ENCODE measurements at regions of chr3 and their contacts with region 1.

Region 1: DNA sequence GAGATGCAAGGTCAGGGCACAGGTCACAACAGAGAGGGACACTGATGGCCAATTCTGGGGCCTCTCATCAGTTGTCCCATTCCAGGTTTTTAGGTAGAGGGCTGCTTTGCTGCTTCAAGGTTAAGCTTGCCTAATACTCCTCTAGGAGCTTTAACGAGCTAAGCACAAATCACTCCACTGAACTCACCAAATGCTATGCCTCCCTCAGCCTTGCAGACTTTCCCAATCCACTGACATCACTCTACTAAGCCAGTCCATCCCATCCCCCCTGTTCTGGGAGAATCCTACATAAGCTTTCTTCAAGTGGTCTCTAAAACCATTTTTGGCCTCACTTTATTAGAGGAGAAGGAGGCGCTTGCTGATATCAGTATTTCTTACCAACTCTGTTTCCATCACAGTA is 24.8 kb upstream of the PDCD6IP start:
- DNase-seq: no peak
- ATAC-seq: no peak
- H3K4me3 Mint-ChIP-seq: no peak overlapping the region
- H3K27ac Mint-ChIP-seq: no peak overlapping the region
- H3K4me1 Mint-ChIP-seq: no peaks in the 10 kb centered on the region
- H3K27me3 Mint-ChIP-seq: no peaks in the 10 kb centered on the region

Region 2: GRCh38 chr3:33441585-33441984 is 332.1 kb before region 1 on chr3:
- CTCF ChIA-PET with region 1: no interaction called
- POLR2A ChIA-PET with region 1: no interaction called
- intact Hi-C with region 1: no loop called
- DNase-seq: no peak
- ATAC-seq: no peak
- H3K4me3 Mint-ChIP-seq: peak overlapping the region; percentile 91
- H3K27ac Mint-ChIP-seq: peak overlapping the region; percentile 100
- H3K4me1 Mint-ChIP-seq: peaks cover 31% of the 10 kb centered on the region
- H3K27me3 Mint-ChIP-seq: no peaks in the 10 kb centered on the region

Region 3: GRCh38 chr3:33592999-33593398 is 180.6 kb before region 1 on chr3:
- CTCF ChIA-PET with region 1: no interaction called
- POLR2A ChIA-PET with region 1: no interaction called
- intact Hi-C with region 1: no loop called
- DNase-seq: no peak
- ATAC-seq: no peak
- H3K4me3 Mint-ChIP-seq: no peak overlapping the region
- H3K27ac Mint-ChIP-seq: no peak overlapping the region
- H3K4me1 Mint-ChIP-seq: no peaks in the 10 kb centered on the region
- H3K27me3 Mint-ChIP-seq: no peaks in the 10 kb centered on the region

Region 4: DNA sequence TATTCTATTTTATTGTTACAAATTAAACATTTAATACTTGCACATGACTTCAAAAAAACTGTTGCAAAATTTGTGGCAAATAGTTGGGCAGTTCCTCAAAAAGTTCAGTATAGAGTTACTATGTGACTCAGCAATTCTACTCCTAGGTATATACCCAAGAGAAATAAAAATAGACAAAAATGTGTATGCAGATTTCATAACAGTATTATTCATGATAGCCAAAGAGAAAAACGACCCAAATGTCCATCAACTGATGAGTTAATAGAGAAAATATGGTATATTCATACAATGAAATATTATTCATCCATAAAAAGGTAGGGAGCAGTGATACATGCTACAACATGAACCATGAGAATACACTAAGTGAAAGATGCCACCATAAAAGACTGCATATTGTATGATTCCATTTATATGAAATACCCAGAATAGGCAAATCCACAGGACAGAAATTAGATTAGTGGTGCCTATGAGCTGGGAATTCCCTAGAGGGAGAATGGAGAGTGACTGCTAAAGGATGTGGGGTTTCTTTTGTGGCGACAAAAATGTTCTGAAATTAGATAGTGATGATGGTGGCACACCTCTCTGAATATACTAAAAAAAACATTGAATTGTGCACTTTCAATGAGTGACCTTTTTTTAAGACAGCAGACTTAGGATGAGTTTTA is 24.0 kb before region 1 on chr3:
- CTCF ChIA-PET with region 1: no interaction called
- POLR2A ChIA-PET with region 1: no interaction called
- intact Hi-C with region 1: no loop called
- DNase-seq: no peak
- ATAC-seq: peak; percentile 12
- H3K4me3 Mint-ChIP-seq: no peak overlapping the region
- H3K27ac Mint-ChIP-seq: no peak overlapping the region
- H3K4me1 Mint-ChIP-seq: peaks cover 5% of the 10 kb centered on the region
- H3K27me3 Mint-ChIP-seq: peaks cover 4% of the 10 kb centered on the region

Region 5: GRCh38 chr3:33787328-33788009 is 13.8 kb after region 1 on chr3:
- CTCF ChIA-PET with region 1: interaction called, 19 read pairs
- POLR2A ChIA-PET with region 1: no interaction called
- intact Hi-C with region 1: no loop called
- DNase-seq: peak; percentile 72
- ATAC-seq: peak; percentile 87
- H3K4me3 Mint-ChIP-seq: peak overlapping the region; percentile 36
- H3K27ac Mint-ChIP-seq: no peak overlapping the region
- H3K4me1 Mint-ChIP-seq: peaks cover 7% of the 10 kb centered on the region
- H3K27me3 Mint-ChIP-seq: peaks cover 6% of the 10 kb centered on the region

Measured in activated CD4-positive, alpha-beta T cell treated with anti-CD3 and anti-CD28 coated beads for 36 hours (primary cell).